ENCODE measurements at regions of chr12 and their contacts with region 1.

Region 1: DNA sequence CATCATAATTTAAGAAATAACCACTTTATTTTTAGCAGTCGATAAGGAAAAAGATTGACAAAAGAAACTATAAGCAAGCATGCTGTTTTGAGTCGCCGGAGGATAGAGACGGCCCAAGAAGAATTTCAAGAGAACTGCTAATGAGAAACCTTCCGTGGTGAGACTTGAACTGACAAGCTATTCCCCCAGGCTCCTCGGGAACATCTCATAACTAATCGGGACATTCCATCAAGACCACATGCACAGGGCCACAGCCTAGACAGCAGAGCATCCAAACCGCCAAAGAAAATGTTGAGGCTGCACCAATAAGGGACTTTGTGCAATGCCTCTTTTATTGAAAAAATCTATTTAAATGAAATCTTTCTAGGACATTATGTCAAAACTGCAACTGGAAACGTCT is 51.0 kb downstream of the YEATS4 start:
- DNase-seq: no peak
- H3K4me3 ChIP-seq: no peak overlapping the region
- H3K27ac ChIP-seq: no peak overlapping the region
- H3K4me1 ChIP-seq: no peaks in the 10 kb centered on the region
- H3K27me3 ChIP-seq: no peaks in the 10 kb centered on the region
- CTCF ChIP-seq: no peak

Region 2: DNA sequence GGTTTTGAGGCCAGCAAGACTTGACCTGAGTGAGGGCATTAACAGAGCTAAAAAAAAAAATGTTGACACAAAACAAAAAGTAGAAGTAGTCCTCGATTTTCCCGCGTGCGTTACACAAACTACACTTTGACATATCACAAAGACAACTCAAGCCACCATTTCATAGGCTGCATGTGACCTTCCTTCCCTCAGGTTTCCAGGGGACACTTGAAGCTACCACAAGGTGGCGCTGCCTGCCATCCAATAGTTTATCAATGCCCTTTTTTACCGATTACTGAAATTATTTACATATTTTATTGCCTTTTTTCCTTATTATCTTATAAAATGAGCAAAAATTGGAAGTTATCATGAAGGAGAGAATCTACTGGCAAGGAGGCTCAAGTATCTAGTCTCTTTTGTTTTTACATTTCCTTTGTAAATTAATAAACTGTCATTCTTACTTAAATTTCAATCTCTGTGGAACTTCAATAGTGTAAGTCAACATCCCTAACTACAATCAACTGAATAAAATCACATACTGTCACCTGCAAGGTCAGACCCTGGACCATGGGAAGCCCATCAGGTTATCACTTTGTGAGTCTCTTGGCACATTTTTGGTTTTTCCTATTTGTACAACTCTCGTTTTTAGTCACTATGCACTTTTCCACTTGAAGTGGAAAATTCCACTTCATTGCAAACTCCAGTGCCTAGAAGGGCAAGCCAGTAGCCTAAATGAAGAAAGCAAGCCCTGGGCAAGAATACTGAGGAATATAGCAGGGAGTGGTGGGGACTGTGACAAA is 255.8 kb before region 1 on chr12:
- intact Hi-C with region 1: no loop called
- DNase-seq: peak; percentile 79
- H3K4me3 ChIP-seq: no peak overlapping the region
- H3K27ac ChIP-seq: no peak overlapping the region
- H3K4me1 ChIP-seq: no peaks in the 10 kb centered on the region
- H3K27me3 ChIP-seq: no peaks in the 10 kb centered on the region
- CTCF ChIP-seq: peak; percentile 95

Region 3: DNA sequence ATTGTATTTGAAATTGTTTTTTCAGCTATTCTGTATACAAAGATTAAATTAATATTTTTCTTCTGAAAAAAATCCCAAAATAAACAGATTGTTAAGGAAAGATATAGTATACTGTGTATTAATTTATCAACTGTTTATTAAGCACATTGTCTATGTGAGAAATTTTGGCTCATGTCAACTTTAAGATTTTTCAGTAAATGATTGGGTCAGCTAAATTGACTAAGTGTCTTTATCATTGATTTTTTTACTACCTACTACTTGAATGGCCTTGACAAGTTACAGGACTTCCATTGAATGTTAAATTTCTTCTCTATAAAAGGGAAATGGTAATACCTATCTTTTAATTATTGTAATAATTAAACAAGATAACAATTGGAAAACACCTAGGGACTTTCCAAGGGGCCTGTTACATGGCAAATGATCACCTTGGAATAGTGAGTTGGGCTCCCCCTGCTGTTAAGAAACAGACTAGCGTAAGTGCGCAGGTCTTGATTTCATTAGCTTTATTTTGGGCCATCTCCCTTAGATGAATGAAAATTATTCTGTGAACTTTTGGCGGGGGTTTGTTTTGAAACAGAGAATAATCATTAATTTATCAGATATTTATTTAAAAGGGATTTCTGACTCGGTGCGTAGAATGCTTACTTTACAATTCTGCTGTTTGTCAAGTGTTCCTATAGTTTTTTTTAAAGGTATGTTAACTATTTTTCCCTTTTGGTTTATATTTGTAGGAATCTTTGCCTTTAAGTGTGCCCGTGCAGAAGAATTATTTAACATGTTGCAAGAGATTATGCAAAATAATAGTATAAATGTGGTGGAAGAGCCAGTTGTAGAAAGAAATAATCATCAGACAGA is 160.2 kb after region 1 on chr12:
- intact Hi-C with region 1: loop called (anchors 5 kb)
- DNase-seq: peak; percentile 58
- H3K4me3 ChIP-seq: no peak overlapping the region
- H3K27ac ChIP-seq: no peak overlapping the region
- H3K4me1 ChIP-seq: no peaks in the 10 kb centered on the region
- H3K27me3 ChIP-seq: no peaks in the 10 kb centered on the region
- CTCF ChIP-seq: peak; percentile 82

Measured in colonic mucosa (tissue), 4 donors.